ENCODE measurements at regions of chr20 and their contacts with region 1.

Region 1: GRCh38 chr20:48828022-48828743 is 384 bp upstream of the PREX1 start:
- DNase-seq: peak; percentile 82
- H3K4me3 Mint-ChIP-seq: peak overlapping the region; percentile 76
- H3K27ac Mint-ChIP-seq: peak overlapping the region; percentile 72
- H3K4me1 Mint-ChIP-seq: peaks cover 30% of the 10 kb centered on the region
- H3K27me3 Mint-ChIP-seq: no peaks in the 10 kb centered on the region

Region 2: GRCh38 chr20:47487175-47487917 is 1340.8 kb before region 1 on chr20:
- CTCF ChIA-PET with region 1: no interaction called
- POLR2A ChIA-PET with region 1: no interaction called
- intact Hi-C with region 1: loop called (anchors 5 kb)
- DNase-seq: peak; percentile 77
- H3K4me3 Mint-ChIP-seq: peak overlapping the region; percentile 30
- H3K27ac Mint-ChIP-seq: peak overlapping the region; percentile 97
- H3K4me1 Mint-ChIP-seq: peaks cover 55% of the 10 kb centered on the region
- H3K27me3 Mint-ChIP-seq: no peaks in the 10 kb centered on the region

Region 3: DNA sequence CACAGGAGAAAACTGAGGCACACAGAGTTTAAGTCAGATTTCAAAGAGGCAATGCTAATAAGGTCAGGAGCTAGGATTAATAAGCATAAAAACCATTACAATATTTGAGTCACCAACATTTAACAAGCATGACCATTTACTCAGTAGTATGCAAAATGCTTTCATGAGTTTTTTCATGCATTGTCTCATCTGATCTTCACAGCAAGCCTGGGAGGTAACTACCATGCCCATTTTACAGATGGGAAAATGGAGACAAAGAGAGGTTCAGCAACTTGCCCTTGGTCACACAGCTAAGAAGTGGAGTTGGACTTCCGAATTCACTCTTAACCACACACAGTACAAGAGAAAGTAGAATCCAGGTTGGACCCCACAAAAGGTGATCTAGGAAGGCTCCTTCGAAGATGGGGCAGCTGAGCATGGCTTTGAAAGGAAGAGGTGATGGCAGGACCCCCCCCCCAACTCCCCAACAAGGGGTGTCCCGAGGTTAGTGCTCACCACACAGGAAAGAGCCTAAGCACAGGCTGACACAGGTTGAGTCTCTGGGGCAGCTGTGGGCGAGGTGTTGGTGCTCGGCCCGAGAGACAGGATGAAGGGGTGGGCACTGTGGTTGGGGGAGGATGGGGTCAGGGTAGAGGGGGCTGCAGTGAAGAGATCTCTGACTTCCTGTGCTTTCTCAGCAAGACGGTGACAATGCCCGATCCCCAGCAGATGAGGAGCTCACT is 109.2 kb before region 1 on chr20:
- CTCF ChIA-PET with region 1: no interaction called
- POLR2A ChIA-PET with region 1: interaction called, 3 read pairs
- intact Hi-C with region 1: loop called (anchors 2 kb)
- DNase-seq: peak; percentile 70
- H3K4me3 Mint-ChIP-seq: peak overlapping the region; percentile 54
- H3K27ac Mint-ChIP-seq: peak overlapping the region; percentile 79
- H3K4me1 Mint-ChIP-seq: peaks cover 88% of the 10 kb centered on the region
- H3K27me3 Mint-ChIP-seq: no peaks in the 10 kb centered on the region

Region 4: DNA sequence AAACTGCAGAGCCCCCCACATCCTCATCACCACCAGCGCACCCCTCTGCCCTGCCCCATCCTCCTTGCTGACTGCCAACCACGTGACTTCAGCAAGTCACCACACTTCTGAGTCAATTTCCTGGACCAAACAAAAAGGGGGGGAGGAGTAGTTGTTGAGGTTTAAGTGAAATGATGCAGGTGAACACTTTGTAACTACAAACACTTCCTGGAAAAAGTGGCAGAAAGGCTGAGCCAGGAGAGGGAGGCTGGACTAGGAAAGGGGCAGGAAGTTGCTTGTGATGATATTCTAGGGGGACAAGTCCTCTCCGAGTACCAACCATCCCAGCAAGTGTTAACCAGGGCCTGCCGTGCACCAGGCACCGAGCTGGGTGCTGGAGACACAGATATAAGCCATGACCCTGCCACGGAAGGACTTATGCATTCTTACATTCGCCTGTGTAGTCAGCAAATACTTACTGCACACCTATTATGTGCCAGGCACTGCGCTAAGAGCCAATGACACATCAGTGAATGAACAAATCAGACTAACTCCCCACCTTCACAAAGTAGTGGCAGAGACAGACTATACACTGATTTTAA is 67.7 kb before region 1 on chr20:
- CTCF ChIA-PET with region 1: interaction called, 6 read pairs
- POLR2A ChIA-PET with region 1: interaction called, 3 read pairs
- intact Hi-C with region 1: loop called (anchors 1 kb)
- DNase-seq: peak; percentile 84
- H3K4me3 Mint-ChIP-seq: peak overlapping the region; percentile 52
- H3K27ac Mint-ChIP-seq: peak overlapping the region; percentile 97
- H3K4me1 Mint-ChIP-seq: peaks cover 86% of the 10 kb centered on the region
- H3K27me3 Mint-ChIP-seq: no peaks in the 10 kb centered on the region

Region 5: GRCh38 chr20:48787861-48788375 is 40.3 kb before region 1 on chr20:
- CTCF ChIA-PET with region 1: interaction called, 3 read pairs
- POLR2A ChIA-PET with region 1: interaction called, 30 read pairs
- intact Hi-C with region 1: loop called (anchors 1 kb)
- DNase-seq: no peak
- H3K4me3 Mint-ChIP-seq: no peak overlapping the region
- H3K27ac Mint-ChIP-seq: peak overlapping the region; percentile 81
- H3K4me1 Mint-ChIP-seq: peaks cover 53% of the 10 kb centered on the region
- H3K27me3 Mint-ChIP-seq: no peaks in the 10 kb centered on the region

Region 6: DNA sequence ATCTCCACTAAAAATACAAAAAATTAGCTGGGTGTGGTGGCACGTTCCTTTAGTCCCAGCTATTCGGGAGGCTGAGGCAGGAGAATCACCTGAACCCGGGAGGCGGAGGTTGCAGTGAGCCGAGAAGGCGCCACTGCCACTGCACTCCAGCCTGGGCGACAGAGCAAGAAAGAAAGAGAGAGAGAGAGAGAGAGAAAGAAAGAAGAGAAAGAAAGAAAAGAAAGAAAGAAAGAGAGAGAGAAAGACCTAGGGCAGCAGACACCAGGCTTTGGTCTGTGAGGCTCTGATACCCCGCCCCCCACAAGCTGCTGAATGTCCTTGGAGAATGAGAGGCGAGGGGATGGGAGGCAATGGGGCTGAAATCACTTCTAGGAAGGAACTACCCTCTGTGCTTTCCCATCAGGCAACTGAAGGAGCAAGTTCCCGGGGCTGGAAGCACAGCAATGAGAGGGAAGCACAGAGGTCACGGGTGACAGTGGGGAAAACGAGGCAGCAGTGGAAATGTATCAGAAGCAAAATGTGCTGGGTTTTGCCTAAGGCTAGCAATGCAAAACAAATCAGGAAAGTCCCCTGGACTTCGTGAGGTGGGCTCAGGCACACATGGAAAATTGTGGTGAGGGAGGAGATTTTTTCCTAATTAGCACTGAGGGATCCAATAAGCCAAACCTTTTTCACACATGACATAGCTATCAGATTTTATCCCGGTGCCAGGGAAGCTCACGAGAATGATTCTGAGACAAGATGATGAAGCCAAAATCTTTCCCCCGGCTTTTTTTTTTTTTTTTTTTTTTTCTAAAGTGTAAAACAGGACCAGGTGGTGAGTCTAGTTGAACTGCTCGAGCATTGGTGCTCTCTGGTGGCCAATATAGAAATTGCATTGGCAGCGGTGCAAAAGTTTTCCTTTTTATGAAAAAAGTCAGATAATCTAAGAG is 76.4 kb after region 1 on chr20:
- CTCF ChIA-PET with region 1: no interaction called
- POLR2A ChIA-PET with region 1: interaction called, 4 read pairs
- intact Hi-C with region 1: loop called (anchors 5 kb)
- DNase-seq: peak; percentile 80
- H3K4me3 Mint-ChIP-seq: no peak overlapping the region
- H3K27ac Mint-ChIP-seq: peak overlapping the region; percentile 28
- H3K4me1 Mint-ChIP-seq: peaks cover 14% of the 10 kb centered on the region
- H3K27me3 Mint-ChIP-seq: no peaks in the 10 kb centered on the region

Region 7: DNA sequence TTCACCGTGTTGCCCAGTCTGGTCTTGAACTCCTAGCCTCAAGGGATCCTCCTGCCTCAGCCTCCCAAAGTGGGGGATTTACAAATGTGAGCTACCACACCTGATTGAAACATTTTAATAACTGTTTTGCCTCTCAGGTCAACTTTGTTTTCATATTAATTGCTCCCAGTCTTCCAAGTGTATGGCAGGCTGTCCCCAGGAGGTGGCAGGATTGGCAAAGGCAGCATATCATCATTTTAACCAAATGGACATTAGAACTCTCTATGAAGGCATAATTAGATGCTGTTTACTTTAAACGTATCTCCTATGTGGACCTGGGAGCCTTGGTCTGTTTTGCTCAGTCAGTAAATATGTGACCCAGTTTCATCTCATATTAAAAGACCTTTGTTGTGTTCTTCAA is 158.7 kb after region 1 on chr20:
- CTCF ChIA-PET with region 1: no interaction called
- POLR2A ChIA-PET with region 1: no interaction called
- intact Hi-C with region 1: no loop called
- DNase-seq: no peak
- H3K4me3 Mint-ChIP-seq: no peak overlapping the region
- H3K27ac Mint-ChIP-seq: no peak overlapping the region
- H3K4me1 Mint-ChIP-seq: no peaks in the 10 kb centered on the region
- H3K27me3 Mint-ChIP-seq: no peaks in the 10 kb centered on the region

Region 8: GRCh38 chr20:49046087-49046900 is 218.1 kb after region 1 on chr20 and contains the start of gene CSE1L:
- CTCF ChIA-PET with region 1: no interaction called
- POLR2A ChIA-PET with region 1: interaction called, 3 read pairs
- intact Hi-C with region 1: loop called (anchors 5 kb)
- DNase-seq: peak; percentile 96
- H3K4me3 Mint-ChIP-seq: peak within 1 kb of the TSS; percentile 99
- H3K27ac Mint-ChIP-seq: peak within 1 kb of the TSS; percentile 99
- H3K4me1 Mint-ChIP-seq: peaks cover 33% of the 10 kb centered on the region
- H3K27me3 Mint-ChIP-seq: no peaks in the 10 kb centered on the region
- total RNA-seq, gene CSE1L: 107 to 109 TPM

Measured in activated CD4-positive, alpha-beta memory T cell treated with anti-CD3 and anti-CD28 coated beads for 36 hours (primary cell).